BJ (cell line): ENCODE measurements at regions of chr14 and their contacts with region 1.

Region 1: GRCh38 chr14:76784266-76785264 is 23.3 kb downstream of the VASH1 start:
- DNase-seq: no peak
- H3K4me3 ChIP-seq: no peak overlapping the region
- H3K27me3 ChIP-seq: no peaks in the 10 kb centered on the region
- CTCF ChIP-seq: peak; percentile 92

Region 2: GRCh38 chr14:76773188-76773885 is 11.2 kb before region 1 on chr14:
- CTCF ChIA-PET with region 1: interaction called, 20 read pairs
- POLR2A ChIA-PET with region 1: interaction called, 3 read pairs
- DNase-seq: peak; percentile 46
- H3K4me3 ChIP-seq: no peak overlapping the region
- H3K27me3 ChIP-seq: no peaks in the 10 kb centered on the region
- CTCF ChIP-seq: peak; percentile 40

Region 3: DNA sequence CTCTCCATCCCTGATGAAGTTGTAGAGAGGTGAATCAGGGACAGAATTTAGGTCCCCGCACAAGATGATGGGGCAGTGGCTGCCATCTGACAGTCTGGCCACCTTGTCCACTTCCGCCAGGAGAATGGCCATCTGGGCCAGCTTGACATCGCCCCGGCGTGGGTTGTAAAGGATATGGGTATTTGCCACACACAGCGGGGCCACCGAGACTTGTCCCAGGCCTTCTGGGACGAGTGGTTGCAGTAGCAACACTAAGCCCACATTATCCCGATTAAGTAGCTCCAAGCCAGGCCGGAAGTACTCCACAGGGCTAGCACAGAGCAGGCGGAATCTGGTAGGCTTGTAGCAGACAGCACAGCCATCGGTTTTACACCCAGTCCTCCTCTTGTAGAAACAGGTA is 21.9 kb after region 1 on chr14:
- CTCF ChIA-PET with region 1: interaction called, 26 read pairs
- POLR2A ChIA-PET with region 1: no interaction called
- DNase-seq: no peak
- H3K4me3 ChIP-seq: no peak overlapping the region
- H3K27me3 ChIP-seq: no peaks in the 10 kb centered on the region
- CTCF ChIP-seq: no peak

Region 4: GRCh38 chr14:76812211-76813044 is 27.9 kb after region 1 on chr14 and contains the start of gene ANGEL1:
- CTCF ChIA-PET with region 1: interaction called, 26 read pairs
- POLR2A ChIA-PET with region 1: no interaction called
- DNase-seq: peak; percentile 23
- H3K4me3 ChIP-seq: peak within 1 kb of the TSS; percentile 80
- H3K27me3 ChIP-seq: peaks cover 2% of the 10 kb centered on the region; the same call in 1 of the 2 replicates
- CTCF ChIP-seq: no peak
- polyA plus RNA-seq, gene ANGEL1: 14.0 and 16.8 TPM in 2 replicates

Region 5: DNA sequence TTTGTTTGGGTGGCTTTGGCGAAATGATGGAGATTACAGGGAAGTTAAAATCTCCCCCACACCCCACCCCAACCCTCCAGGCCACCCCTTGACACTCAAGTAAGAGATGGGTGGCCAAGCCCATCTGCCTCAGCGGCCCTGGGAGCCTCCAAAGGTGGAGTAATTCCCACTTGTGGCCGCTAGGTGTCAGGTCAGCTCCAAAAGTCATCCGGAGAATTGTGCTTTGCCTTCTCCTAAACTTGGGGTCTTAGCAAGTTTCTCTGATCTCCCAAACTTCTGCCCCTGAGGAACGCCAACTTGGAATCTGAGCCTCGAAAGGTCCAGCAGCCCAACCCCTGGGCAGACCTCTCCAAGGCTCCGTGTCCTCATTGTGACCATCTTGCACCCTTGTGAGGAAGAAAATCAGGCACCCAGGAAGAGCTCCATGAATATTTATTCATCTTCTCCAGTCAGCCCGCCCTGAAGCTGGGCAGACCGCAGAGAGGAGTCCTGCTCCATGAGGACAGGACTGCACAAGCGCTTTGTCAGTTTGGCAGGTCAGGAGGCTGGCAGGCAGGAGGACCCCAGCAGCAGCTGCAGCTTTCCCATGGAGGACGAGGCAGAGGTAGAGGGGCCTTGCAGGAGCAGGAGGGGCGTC is 88.3 kb after region 1 on chr14:
- CTCF ChIA-PET with region 1: no interaction called
- POLR2A ChIA-PET with region 1: no interaction called
- DNase-seq: no peak
- H3K4me3 ChIP-seq: no peak overlapping the region
- H3K27me3 ChIP-seq: peaks cover 5% of the 10 kb centered on the region; the same call in 1 of the 2 replicates
- CTCF ChIP-seq: peak; percentile 84